PC-9 (cell line): ENCODE measurements at regions of chr11 and their contacts with region 1.

Region 1: DNA sequence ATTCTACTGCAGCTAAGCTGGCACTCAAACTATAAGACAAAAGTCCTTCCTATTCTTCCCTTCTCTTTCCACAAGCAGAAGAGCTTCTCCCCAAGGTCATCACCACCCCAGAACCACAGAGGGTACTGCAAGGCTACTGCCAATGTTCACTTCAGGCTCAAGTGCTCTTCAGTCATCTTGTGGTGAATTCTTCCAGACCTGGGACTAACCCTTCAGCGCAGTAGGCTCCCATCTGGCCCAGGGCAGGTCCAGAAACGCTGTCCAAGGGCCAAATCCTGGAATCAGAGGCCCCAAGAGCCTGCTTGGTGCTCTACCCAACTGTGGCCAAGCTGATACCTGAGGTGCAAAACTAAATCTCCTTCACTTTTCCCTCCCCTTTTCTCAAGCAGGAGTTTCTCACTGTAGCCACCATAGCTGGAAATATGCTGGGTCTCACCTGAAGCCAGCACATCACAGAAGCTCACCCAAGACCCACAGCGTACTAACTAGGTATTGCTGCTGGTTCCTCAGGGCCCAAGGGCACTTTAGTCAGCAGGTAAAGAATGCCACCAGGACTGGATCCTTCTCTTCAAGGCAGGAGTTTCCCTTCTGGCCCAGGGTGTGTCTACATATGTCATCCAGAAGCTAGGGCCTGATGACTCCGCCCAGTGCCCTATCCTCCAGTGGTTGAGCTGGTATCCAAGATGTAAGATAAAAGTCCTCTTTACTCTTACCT is 27.9 kb downstream of the FCHSD2 start:
- DNase-seq: peak; percentile 78 to 94
- H3K4me3 ChIP-seq: peak overlapping the region; percentile 2; the same call in 1 of the 2 replicates
- H3K27ac ChIP-seq: peak overlapping the region; percentile 64
- H3K4me1 ChIP-seq: peaks cover 27% of the 10 kb centered on the region
- H3K27me3 ChIP-seq: no peaks in the 10 kb centered on the region
- CTCF ChIP-seq: no peak

Region 2: GRCh38 chr11:73019449-73019848 is 94.8 kb before region 1 on chr11:
- CTCF ChIA-PET with region 1: no interaction called
- POLR2A ChIA-PET with region 1: interaction called, 10 read pairs
- intact Hi-C with region 1: no loop called
- DNase-seq: no peak
- H3K4me3 ChIP-seq: no peak overlapping the region
- H3K27ac ChIP-seq: no peak overlapping the region
- H3K4me1 ChIP-seq: no peaks in the 10 kb centered on the region
- H3K27me3 ChIP-seq: no peaks in the 10 kb centered on the region
- CTCF ChIP-seq: no peak